Heart left ventricle (tissue), 16 donors: ENCODE measurements at regions of chr17 and their contacts with region 1.

Region 1: GRCh38 chr17:49616601-49617131 is 41.0 kb downstream of the NXPH3 start:
- DNase-seq: peak; percentile 69 to 86 (median 75)
- ATAC-seq: peak; percentile 75 to 91 (median 86)
- H3K4me3 ChIP-seq: peak overlapping the region in 1 of 12 donors; percentile 19
- H3K27ac ChIP-seq: peak overlapping the region in 11 of 12 donors; percentile 1 to 73 (median 54)
- H3K4me1 ChIP-seq: peaks cover 0 to 65% (median 39%) of the 10 kb centered on the region in 12 donors
- H3K27me3 ChIP-seq: no peaks in the 10 kb centered on the region
- CTCF ChIP-seq: peak in 1 of 12 donors; percentile 7
- POLR2A ChIP-seq: no peak

Region 2: GRCh38 chr17:49677933-49678847 is 61.5 kb after region 1 on chr17 and contains the start of gene SPOP:
- intact Hi-C with region 1: loop called in 7 of 10 experiments (anchors 2 to 10 kb)
- DNase-seq: peak; percentile 99 to 100 (median 100)
- ATAC-seq: peak; percentile 98 to 99 (median 99)
- H3K4me3 ChIP-seq: peak within 1 kb of the TSS; percentile 33 to 89 (median 76)
- H3K27ac ChIP-seq: peak within 1 kb of the TSS; percentile 90 to 99 (median 97)
- H3K4me1 ChIP-seq: peaks cover 0 to 59% (median 35%) of the 10 kb centered on the region in 12 donors
- H3K27me3 ChIP-seq: no peaks in the 10 kb centered on the region
- CTCF ChIP-seq: peak in 1 of 12 donors; percentile 11
- POLR2A ChIP-seq: peak in 1 of 2 donors; percentile 49
- total RNA-seq, gene SPOP: 46.7 to 96.1 (median 60.4) TPM

Region 3: DNA sequence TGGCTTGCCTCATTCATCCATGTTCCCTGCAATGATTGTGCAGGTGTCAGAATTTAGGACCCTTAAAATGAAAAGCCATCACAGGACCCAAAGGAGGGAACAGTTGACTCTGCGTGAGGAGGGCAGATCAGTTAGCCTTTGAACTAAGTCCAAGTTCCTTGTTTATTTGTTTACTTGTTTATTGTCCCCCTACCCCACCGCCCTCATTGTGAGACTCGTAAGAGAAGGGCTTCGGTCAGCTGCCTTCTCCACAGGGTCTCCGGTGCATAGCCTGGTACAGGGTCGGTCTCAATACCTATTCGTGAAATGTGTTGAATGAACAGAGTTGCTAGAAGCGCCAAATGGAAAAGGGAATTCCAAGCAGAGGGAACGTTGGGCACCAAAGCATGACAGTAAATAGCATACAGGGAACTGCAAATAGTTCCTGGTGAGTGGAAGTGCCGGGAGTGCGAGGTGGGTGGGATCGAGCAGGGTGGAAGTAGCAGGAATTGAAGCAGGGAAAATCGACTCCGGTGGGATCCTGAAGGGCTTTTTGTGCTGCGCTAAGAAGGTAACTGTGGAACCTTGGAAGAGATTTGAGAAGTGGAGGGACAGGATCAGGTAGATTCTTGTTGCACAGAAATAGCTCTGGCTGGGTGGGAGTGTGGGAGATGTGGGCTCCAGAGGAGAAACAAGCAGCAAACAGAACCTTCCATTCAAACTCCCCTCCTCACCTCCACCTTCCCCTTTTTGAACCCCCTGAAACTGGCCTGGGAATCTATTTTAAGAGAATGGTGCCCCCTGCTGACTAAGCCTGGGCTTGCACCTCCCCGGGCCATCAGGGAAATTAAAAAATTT is 78.4 kb after region 1 on chr17:
- intact Hi-C with region 1: loop called in 2 of 10 experiments (anchors 5 kb)
- DNase-seq: peak in 3 of 5 donors; percentile 39 to 58 (median 52)
- ATAC-seq: no peak
- H3K4me3 ChIP-seq: peak overlapping the region in 1 of 12 donors; percentile 16
- H3K27ac ChIP-seq: no peak overlapping the region
- H3K4me1 ChIP-seq: peaks cover 0 to 47% (median 26%) of the 10 kb centered on the region in 12 donors
- H3K27me3 ChIP-seq: no peaks in the 10 kb centered on the region
- CTCF ChIP-seq: peak; percentile 81 to 97 (median 92)
- POLR2A ChIP-seq: no peak